CD4-positive, alpha-beta T cell (primary cell): ENCODE measurements at regions of chr12 and their contacts with region 1.

Region 1: GRCh38 chr12:93677195-93678064 is at the start of gene CRADD:
- DNase-seq: peak; percentile 66 to 99 (median 80)
- ATAC-seq: peak; percentile 94
- H3K4me3 ChIP-seq: peak within 1 kb of the TSS; percentile 71
- H3K4me3 Mint-ChIP-seq: peak within 1 kb of the TSS; percentile 97
- H3K27ac ChIP-seq: peak within 1 kb of the TSS; percentile 97 to 98
- H3K27ac Mint-ChIP-seq: peak within 1 kb of the TSS; percentile 100
- H3K4me1 ChIP-seq: peaks cover 24% of the 10 kb centered on the region
- H3K4me1 Mint-ChIP-seq: peaks cover 40% of the 10 kb centered on the region
- H3K27me3 ChIP-seq: peaks cover 7 to 9% of the 10 kb centered on the region in 2 experiments
- H3K27me3 Mint-ChIP-seq: peaks cover 15% of the 10 kb centered on the region
- CTCF ChIP-seq: no peak
- total RNA-seq, gene CRADD: 5.8 to 9.2 TPM

Region 2: DNA sequence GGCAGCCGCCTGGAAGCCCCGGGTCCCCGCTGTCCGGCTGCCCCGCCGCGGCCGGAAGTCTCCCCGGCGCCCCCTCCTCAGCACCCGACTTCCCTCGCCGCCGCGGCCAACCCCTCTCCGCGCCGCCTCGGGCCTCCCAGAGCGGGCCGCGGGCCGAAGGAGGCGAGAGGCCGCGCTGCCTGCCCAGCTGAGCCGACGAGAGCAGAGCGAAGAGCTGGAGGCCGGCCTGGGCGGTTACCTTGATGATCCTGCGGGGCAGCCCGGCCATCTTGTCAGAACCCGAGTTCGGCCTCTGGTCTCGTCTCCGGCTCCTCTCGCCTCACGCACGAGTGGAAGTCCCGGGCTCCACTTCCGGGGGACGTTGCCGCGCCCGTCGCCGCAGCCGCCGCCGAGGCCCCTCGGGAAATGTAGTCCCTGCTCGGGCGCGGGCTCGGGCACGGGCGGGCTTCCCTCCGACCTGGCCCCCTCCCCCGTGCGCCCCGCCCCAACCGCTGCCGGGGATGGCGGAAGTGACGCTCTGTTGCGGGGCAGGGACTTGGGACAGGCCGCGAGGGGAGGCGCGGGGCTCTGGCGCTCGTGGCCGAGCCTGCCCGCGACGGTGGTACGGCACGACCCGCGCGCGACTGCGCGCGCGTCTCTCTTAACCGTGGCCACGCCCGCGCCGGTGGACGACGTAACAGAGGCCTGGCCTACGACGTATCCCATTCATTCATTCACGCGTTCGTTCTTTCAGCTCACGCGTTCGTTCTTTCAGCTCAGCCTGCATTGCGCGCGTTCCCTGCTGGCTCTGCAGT is 235.6 kb before region 1 on chr12 and contains the start of gene UBE2N:
- CTCF ChIA-PET with region 1: no interaction called
- POLR2A ChIA-PET with region 1: interaction called, 7 read pairs
- intact Hi-C with region 1: loop called in 1 of 2 experiments (anchors 5 kb)
- DNase-seq: peak; percentile 92 to 98 (median 95)
- ATAC-seq: peak; percentile 81
- H3K4me3 ChIP-seq: peak within 1 kb of the TSS; percentile 76
- H3K4me3 Mint-ChIP-seq: peak within 1 kb of the TSS; percentile 96
- H3K27ac ChIP-seq: peak within 1 kb of the TSS; percentile 89 to 91
- H3K27ac Mint-ChIP-seq: peak within 1 kb of the TSS; percentile 93
- H3K4me1 ChIP-seq: peaks cover 29% of the 10 kb centered on the region
- H3K4me1 Mint-ChIP-seq: peaks cover 53% of the 10 kb centered on the region
- H3K27me3 ChIP-seq: no peaks in the 10 kb centered on the region
- H3K27me3 Mint-ChIP-seq: no peaks in the 10 kb centered on the region
- CTCF ChIP-seq: no peak
- total RNA-seq, gene UBE2N: 89.8 to 101 TPM

Region 3: DNA sequence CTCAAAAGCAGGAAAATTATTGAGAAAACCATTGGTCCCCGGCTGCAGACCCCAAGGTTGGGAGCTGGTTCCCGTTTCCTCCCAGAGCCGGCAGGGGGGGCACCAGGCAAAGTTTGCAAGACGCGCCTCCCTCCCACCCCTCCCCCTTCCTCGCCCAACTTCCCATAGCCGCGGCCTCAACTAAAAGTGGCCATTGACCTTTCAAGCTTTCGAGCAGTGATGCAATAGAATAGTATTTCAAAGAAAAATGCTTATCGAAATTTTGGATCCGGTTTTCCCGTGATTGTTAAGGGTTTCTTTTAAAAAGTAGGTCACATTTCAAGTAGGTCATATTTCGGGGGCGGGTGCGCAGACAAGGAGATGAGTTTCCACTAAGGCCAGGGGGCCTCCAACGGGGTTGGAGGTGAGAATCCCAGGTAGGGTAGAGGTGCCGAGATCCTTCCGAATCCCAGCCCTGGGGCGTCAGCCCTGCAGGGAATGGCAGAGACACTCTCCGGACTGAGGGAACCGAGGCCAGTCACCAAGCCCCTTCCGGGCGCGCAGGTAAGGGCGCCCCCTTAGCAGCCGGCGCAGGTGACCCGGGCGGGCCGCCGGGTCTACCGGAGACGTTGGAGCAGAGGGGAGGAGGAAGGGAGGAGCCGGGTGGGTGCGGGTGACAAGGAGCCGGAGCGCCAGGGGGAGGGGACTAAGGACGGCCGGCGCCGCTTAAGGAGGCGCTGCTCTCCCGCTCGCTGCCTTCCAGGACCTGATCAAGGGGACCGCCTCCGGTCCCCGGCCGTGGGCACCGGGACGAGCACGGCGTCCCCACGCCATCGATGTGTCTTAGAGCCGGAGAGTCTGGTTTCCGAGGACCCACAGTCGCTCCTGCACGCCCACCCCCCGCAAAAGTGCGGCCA is 107.5 kb before region 1 on chr12:
- CTCF ChIA-PET with region 1: no interaction called
- POLR2A ChIA-PET with region 1: interaction called, 8 read pairs
- intact Hi-C with region 1: loop called (anchors 2 kb)
- DNase-seq: peak; percentile 49 to 88 (median 68)
- ATAC-seq: peak; percentile 44
- H3K4me3 ChIP-seq: peak overlapping the region; percentile 97
- H3K4me3 Mint-ChIP-seq: peak overlapping the region; percentile 95
- H3K27ac ChIP-seq: peak overlapping the region; percentile 67 to 82
- H3K27ac Mint-ChIP-seq: peak overlapping the region; percentile 86
- H3K4me1 ChIP-seq: peaks cover 43% of the 10 kb centered on the region
- H3K4me1 Mint-ChIP-seq: peaks cover 28% of the 10 kb centered on the region
- H3K27me3 ChIP-seq: no peaks in the 10 kb centered on the region
- H3K27me3 Mint-ChIP-seq: no peaks in the 10 kb centered on the region
- CTCF ChIP-seq: peak; percentile 85

Region 4: GRCh38 chr12:93785262-93786010 is 108.0 kb after region 1 on chr12:
- CTCF ChIA-PET with region 1: no interaction called
- POLR2A ChIA-PET with region 1: no interaction called
- intact Hi-C with region 1: loop called in 1 of 2 experiments (anchors 10 kb)
- DNase-seq: peak in 9 of 14 experiments; percentile 10 to 67 (median 27)
- ATAC-seq: peak; percentile 43
- H3K4me3 ChIP-seq: no peak overlapping the region
- H3K4me3 Mint-ChIP-seq: peak overlapping the region; percentile 42
- H3K27ac ChIP-seq: no peak overlapping the region
- H3K27ac Mint-ChIP-seq: peak overlapping the region; percentile 86
- H3K4me1 ChIP-seq: peaks cover 28% of the 10 kb centered on the region
- H3K4me1 Mint-ChIP-seq: peaks cover 65% of the 10 kb centered on the region
- H3K27me3 ChIP-seq: no peaks in the 10 kb centered on the region
- H3K27me3 Mint-ChIP-seq: no peaks in the 10 kb centered on the region
- CTCF ChIP-seq: no peak

Region 5: GRCh38 chr12:94732367-94732990 is 1055.0 kb after region 1 on chr12:
- CTCF ChIA-PET with region 1: no interaction called
- POLR2A ChIA-PET with region 1: no interaction called
- intact Hi-C with region 1: no loop called
- DNase-seq: no peak
- ATAC-seq: no peak
- H3K4me3 ChIP-seq: no peak overlapping the region
- H3K4me3 Mint-ChIP-seq: no peak overlapping the region
- H3K27ac ChIP-seq: no peak overlapping the region
- H3K27ac Mint-ChIP-seq: no peak overlapping the region
- H3K4me1 ChIP-seq: no peaks in the 10 kb centered on the region
- H3K4me1 Mint-ChIP-seq: no peaks in the 10 kb centered on the region
- H3K27me3 ChIP-seq: no peaks in the 10 kb centered on the region
- H3K27me3 Mint-ChIP-seq: peaks cover 11% of the 10 kb centered on the region
- CTCF ChIP-seq: no peak

Region 6: GRCh38 chr12:95003213-95003920 is 1325.9 kb after region 1 on chr12 and contains the start of gene NDUFA12:
- CTCF ChIA-PET with region 1: no interaction called
- POLR2A ChIA-PET with region 1: no interaction called
- intact Hi-C with region 1: loop called in 1 of 2 experiments (anchors 5 kb)
- DNase-seq: peak; percentile 90 to 99 (median 93)
- ATAC-seq: peak; percentile 100
- H3K4me3 ChIP-seq: peak within 1 kb of the TSS; percentile 80
- H3K4me3 Mint-ChIP-seq: peak within 1 kb of the TSS; percentile 96
- H3K27ac ChIP-seq: peak within 1 kb of the TSS; percentile 66 to 76
- H3K27ac Mint-ChIP-seq: peak within 1 kb of the TSS; percentile 87
- H3K4me1 ChIP-seq: peaks cover 29% of the 10 kb centered on the region
- H3K4me1 Mint-ChIP-seq: peaks cover 55% of the 10 kb centered on the region
- H3K27me3 ChIP-seq: no peaks in the 10 kb centered on the region
- H3K27me3 Mint-ChIP-seq: no peaks in the 10 kb centered on the region
- CTCF ChIP-seq: no peak
- total RNA-seq, gene NDUFA12: 43.3 to 43.7 TPM

Region 7: GRCh38 chr12:95057424-95057823 is 1380.0 kb after region 1 on chr12:
- CTCF ChIA-PET with region 1: no interaction called
- POLR2A ChIA-PET with region 1: no interaction called
- intact Hi-C with region 1: no loop called
- DNase-seq: no peak
- ATAC-seq: no peak
- H3K4me3 ChIP-seq: no peak overlapping the region
- H3K4me3 Mint-ChIP-seq: no peak overlapping the region
- H3K27ac ChIP-seq: no peak overlapping the region
- H3K27ac Mint-ChIP-seq: no peak overlapping the region
- H3K4me1 ChIP-seq: no peaks in the 10 kb centered on the region
- H3K4me1 Mint-ChIP-seq: no peaks in the 10 kb centered on the region
- H3K27me3 ChIP-seq: no peaks in the 10 kb centered on the region
- H3K27me3 Mint-ChIP-seq: no peaks in the 10 kb centered on the region
- CTCF ChIP-seq: no peak